Common myeloid progenitor, CD34-positive (primary cell): ENCODE measurements at regions of chr15 and their contacts with region 1.

Region 1: DNA sequence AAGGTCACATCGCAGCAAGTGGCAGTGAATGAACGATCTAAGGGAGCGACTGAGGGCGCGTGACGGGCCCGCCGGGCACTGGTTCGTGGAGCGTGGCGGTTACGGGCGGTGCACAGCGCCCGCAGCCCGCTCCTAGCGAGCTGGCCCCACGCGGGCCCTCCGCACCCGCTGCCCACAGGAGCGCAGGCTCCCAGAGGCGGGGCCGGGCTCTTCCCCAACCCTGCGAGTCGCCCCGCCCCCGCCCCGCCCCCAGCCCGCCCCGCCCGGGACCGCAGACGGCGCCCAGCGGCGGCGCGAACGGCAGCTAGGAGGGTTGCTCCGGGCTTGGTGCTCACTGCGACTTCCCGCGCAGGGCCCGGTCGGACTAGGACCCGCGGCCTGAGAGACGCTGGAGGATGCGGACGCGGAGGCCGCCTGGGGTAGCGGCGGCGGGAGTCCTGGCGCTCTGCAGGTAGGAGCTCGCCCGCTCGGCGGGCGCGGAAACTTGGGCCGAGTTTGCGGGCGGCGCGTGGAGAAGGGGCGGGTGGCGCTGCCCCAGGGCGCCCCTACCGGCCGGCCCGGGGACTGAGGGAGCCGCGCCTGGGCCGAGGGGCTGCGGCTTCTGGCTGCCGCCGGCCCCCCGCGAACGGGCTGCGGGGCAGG is at the start of gene C15orf39:
- DNase-seq: peak; percentile 63 to 82 (median 78)
- H3K4me3 ChIP-seq: peak within 1 kb of the TSS; percentile 83 to 95 (median 91)
- H3K27ac ChIP-seq: peak within 1 kb of the TSS; percentile 87 to 93
- H3K4me1 ChIP-seq: peaks cover 20 to 84% (median 79%) of the 10 kb centered on the region in 4 experiments
- H3K27me3 ChIP-seq: no peaks in the 10 kb centered on the region

Region 2: GRCh38 chr15:75023181-75023871 is 178.4 kb before region 1 on chr15 and contains the start of gene PPCDC:
- CTCF ChIA-PET with region 1: interaction called, 140 read pairs
- POLR2A ChIA-PET with region 1: interaction called, 17 read pairs
- DNase-seq: peak; percentile 92 to 94 (median 94)
- H3K4me3 ChIP-seq: peak within 1 kb of the TSS; percentile 54 to 91 (median 90)
- H3K27ac ChIP-seq: peak within 1 kb of the TSS; percentile 76 to 91
- H3K4me1 ChIP-seq: peaks cover 2 to 69% (median 44%) of the 10 kb centered on the region in 4 experiments
- H3K27me3 ChIP-seq: no peaks in the 10 kb centered on the region

Region 3: DNA sequence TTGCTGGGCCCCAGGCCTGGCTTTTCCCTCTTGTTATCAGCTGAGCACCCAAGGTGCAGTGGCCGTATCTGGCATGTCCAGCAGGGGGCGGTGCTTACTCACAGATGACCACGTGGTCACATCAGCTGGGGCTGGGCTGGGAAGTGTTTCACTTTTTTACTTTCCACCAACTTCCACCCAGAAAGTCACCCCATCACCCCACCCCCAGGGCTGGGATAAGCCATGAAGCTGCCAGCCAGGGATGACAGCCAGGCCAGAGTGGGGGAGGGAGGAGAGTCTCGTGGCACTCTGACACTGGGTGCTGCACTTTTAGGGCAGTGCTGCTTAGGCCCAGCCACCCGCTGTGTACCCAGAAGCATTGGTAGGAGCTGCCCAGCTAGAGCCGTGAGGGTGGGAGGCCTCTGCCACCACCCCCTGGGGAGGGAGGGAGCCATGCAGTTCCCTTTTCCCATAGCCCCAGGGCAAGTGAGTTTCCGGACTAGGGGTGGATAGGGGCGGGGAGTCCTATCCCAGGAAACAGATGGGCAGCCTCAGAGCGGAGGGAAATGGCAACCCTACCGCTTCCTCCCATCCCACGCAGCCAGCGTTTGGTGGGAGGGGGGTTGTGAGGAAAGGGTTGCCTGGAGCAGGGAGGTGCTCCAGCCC is 172.2 kb before region 1 on chr15:
- CTCF ChIA-PET with region 1: interaction called, 191 read pairs
- POLR2A ChIA-PET with region 1: interaction called, 17 read pairs
- DNase-seq: peak; percentile 92 to 97 (median 96)
- H3K4me3 ChIP-seq: peak overlapping the region in 4 of 7 experiments; percentile 46 to 62 (median 54)
- H3K27ac ChIP-seq: peak overlapping the region; percentile 72 to 73
- H3K4me1 ChIP-seq: peaks cover 0 to 94% (median 84%) of the 10 kb centered on the region in 4 experiments
- H3K27me3 ChIP-seq: no peaks in the 10 kb centered on the region

Region 4: DNA sequence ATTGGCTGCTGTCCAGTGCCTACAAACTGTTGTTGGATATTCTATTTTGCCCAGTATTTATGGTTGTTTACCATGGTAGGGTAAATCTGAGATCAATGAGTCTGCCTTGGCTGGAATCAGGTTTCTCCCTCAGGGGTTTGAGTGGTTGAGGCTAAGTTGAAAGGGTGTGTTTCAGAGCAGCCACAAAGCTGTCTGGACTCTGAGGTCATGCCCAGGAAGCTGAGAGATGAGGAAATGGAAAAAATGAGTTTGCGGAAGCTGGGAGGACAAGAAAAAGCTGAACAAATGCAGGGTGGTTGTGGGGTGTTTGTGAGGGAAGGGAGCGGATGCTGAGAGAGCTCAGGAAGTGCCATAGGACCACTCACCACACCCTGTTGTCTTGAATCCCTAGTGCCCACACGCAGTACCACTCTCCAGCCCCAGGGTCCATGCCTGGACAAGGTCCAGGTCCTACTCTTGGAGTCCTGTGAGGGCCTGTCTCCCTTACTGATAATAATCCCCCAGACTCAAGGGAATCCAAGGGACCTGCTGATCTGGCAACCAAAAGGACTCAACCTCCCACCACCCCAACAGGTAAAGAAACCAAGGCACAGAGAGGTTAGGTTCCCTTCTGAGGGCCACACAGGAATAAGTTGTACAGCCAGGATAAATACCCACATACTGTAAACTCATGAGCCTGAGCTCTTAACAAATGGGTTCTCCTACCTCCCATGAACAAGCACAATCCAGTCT is 96.8 kb before region 1 on chr15:
- CTCF ChIA-PET with region 1: interaction called, 13 read pairs
- POLR2A ChIA-PET with region 1: interaction called, 9 read pairs
- DNase-seq: peak; percentile 84 to 95 (median 95)
- H3K4me3 ChIP-seq: peak overlapping the region in 3 of 7 experiments; percentile 5 to 28 (median 22)
- H3K27ac ChIP-seq: peak overlapping the region; percentile 38 to 55
- H3K4me1 ChIP-seq: peaks cover 21 to 56% (median 43%) of the 10 kb centered on the region in 4 experiments
- H3K27me3 ChIP-seq: no peaks in the 10 kb centered on the region

Region 5: DNA sequence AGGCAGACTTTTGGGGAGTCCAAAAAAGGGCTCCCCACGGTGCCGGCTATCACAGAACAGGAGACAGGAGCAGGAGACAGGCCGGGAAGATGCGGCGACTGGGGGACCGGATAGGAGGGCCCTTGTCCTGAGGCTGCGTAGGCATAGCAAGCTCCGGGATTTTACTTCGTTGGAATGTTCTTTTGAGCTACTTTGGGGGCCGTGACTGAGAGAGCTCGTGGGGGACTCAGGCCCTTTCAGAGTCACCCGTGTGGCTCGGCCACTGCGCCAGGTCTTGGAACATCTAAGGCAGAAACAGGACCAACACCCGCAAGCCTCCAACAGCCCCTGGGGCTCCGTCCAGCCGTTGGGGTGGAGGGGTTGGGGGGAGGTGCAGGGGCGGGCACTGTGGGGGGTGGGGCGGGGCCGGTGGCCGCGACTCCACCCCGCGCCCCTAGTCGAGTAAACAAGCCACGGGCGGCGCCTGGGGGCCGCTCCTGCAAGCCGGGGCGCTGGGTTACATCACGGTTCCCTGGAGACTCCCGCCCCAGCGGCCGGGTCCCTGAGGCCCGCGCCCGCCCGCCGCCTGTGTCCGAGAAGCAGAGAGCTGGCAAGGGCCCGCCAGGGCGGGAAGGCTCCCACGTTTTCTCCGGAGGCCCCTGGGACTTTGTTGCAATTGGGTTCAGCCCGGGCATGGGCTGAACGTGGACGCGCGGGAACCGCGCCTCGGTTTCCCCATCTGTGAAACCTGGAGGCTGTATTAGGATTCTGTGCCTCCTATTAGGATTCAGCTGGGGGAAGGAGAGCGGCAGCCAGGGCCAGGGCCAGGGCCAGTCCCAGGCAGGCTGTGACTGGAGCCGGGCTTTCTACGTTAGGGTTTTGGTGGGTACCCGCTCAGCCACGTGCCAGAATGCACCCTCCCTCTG is 23.3 kb before region 1 on chr15:
- CTCF ChIA-PET with region 1: interaction called, 123 read pairs
- POLR2A ChIA-PET with region 1: interaction called, 25 read pairs
- DNase-seq: peak in 2 of 3 donors; percentile 60 to 69
- H3K4me3 ChIP-seq: peak overlapping the region in 5 of 7 experiments; percentile 43 to 70 (median 60)
- H3K27ac ChIP-seq: peak overlapping the region; percentile 58 to 84
- H3K4me1 ChIP-seq: peaks cover 18 to 92% (median 80%) of the 10 kb centered on the region in 4 experiments
- H3K27me3 ChIP-seq: no peaks in the 10 kb centered on the region

Region 6: DNA sequence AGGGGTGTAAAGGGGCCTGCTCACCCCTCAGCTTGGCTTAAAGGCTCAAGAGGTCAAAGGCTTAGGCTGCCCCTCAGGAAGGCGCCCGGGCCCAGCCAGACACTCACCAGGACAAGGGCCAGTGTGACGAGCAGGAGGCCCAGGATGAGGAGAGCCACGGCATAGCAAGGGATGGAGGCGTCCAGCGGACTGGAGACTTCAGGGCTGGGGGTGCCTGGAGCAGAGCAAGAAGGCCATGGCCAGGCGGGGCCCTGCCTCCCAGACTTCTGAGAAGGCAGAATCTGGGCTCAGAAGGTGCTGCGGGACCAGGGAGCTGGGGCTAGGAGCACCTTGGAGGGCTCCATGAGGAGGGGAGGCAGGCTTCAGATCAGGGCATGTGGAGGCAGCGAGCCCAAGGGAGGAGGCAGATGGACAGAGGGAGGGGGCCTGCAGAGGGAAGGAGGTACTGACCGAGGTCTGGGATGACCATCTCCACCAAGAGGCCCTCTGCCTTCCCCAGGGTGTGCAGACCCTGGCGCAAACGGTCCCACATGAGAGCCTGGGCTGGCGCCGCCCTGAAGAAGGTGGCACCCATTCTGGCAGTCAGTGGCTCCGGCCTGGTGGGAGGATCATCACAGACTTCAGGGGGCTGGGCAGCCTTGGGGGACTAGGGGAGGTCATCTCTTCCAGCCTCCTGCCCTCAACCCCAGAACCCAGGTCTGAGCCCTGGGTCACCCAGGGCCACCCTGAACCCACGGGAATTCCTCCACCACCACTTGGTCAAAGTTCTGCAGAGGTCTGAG is 24.4 kb after region 1 on chr15:
- CTCF ChIA-PET with region 1: no interaction called
- POLR2A ChIA-PET with region 1: no interaction called
- DNase-seq: no peak
- H3K4me3 ChIP-seq: no peak overlapping the region
- H3K27ac ChIP-seq: no peak overlapping the region
- H3K4me1 ChIP-seq: no peaks in the 10 kb centered on the region
- H3K27me3 ChIP-seq: peaks cover 0 to 4% (median 0%) of the 10 kb centered on the region in 5 experiments

Region 7: DNA sequence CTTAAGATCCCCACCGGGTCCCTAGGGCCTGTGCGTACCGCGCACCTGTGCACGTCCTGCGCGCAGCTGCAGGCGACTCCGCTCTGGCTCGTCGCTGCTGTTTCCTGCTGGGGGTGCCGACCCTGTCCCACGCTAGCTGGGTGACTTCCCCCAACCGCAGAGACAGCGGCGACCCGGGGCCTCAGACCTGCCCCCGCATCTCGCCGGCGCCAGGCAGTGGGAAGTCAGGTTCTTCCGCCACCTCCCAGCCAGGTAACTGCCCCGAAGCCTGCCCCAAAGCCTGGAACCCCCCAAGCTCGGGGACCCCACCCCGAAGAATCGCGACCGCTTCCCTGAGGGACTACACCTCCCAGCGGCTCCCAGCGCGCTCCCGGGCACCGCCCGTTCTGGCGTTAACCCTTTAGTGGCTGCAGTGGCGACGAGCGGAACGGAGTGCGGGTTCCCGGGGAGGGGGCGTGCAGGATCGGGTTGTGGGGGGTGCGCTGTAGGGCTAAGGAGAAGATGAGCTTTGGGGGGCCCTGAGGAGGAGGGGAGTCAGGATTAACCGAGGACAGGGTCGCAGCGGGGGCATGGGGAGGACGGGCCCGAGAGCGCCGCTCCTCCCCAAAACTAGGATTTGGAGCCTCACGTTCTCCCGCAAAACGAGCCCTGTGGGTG is 145.6 kb after region 1 on chr15:
- CTCF ChIA-PET with region 1: no interaction called
- POLR2A ChIA-PET with region 1: no interaction called
- DNase-seq: peak; percentile 55 to 89 (median 86)
- H3K4me3 ChIP-seq: peak overlapping the region; percentile 52 to 84 (median 68)
- H3K27ac ChIP-seq: no peak overlapping the region
- H3K4me1 ChIP-seq: peaks cover 7 to 44% (median 36%) of the 10 kb centered on the region in 4 experiments
- H3K27me3 ChIP-seq: peaks cover 0 to 26% (median 4%) of the 10 kb centered on the region in 5 experiments